PC-9 (cell line): ENCODE measurements at regions of chr9 and their contacts with region 1.

Region 1: DNA sequence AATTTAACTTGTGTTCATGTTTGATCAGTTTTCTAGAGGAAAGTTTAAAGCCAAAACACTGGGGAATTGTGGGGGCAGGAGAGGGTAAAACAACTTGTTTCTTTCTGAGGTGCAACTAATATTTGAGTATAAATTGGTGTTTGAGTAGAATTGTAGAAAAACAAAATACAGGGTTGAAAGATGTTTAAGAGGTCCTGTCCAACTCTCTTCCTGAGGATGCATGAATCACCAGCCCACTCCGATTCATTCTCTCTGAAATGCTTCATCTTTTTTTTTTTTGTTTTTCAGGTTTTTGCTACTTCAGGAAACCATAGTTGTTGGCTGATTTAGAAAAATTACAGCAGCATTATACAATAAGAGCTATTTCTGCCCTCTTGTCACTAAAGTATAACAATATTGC is 42.4 kb upstream of the TMC1 start:
- DNase-seq: no peak
- H3K4me3 ChIP-seq: no peak overlapping the region
- H3K27ac ChIP-seq: peak overlapping the region; percentile 94
- H3K4me1 ChIP-seq: peaks cover 47% of the 10 kb centered on the region
- H3K27me3 ChIP-seq: no peaks in the 10 kb centered on the region
- CTCF ChIP-seq: no peak

Region 2: DNA sequence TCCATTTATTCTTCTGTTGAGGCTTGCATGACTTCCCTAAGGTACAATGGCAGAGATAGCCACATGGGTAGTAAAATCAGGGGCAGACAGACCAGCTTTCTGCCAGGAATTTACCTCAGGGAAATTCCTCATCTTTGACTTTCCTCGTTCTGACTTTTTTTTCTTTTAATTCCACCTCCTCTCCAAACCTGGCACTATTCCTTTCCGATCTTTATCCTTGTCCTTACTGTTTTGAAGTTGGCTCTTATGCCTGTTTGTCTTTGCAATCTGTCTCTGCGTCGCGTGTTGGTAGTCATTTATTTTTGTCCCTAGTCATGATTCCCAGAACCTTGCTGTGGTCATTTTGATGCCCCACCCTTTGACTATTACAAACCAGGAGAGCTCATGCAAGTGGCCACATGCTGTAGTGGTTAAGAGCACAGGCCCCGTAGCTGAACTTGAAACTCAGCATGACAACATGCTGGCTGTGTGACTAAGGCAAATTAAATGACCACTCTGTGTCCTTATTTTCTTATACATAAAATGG is 61.4 kb after region 1 on chr9:
- CTCF ChIA-PET with region 1: no interaction called
- POLR2A ChIA-PET with region 1: no interaction called
- intact Hi-C with region 1: loop called (anchors 1 kb)
- DNase-seq: peak; percentile 43 to 60
- H3K4me3 ChIP-seq: no peak overlapping the region
- H3K27ac ChIP-seq: peak overlapping the region; percentile 42
- H3K4me1 ChIP-seq: peaks cover 54% of the 10 kb centered on the region
- H3K27me3 ChIP-seq: no peaks in the 10 kb centered on the region
- CTCF ChIP-seq: no peak